ENCODE measurements at regions of chr18 and their contacts with region 1.

Region 1: DNA sequence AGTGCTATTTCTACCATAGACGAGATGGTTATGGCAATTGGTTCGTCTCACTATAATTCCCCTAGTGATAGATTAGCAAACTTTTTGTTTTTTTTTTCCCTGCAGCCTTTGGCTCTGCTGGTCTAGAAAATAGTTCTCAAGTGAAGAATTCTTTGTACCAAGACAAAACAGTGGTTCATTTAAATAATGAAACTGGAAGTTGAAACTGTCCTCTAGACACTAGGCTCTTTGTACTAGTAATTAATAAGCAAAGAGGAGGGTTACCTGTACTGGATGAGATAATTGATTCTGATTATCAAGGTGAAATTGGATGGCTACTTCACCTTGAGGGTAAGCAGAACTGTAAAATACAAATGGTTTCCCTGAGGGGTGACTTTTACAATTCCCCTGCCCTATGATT is 156.9 kb upstream of the DCC start:
- DNase-seq: no peak
- ATAC-seq: no peak
- H3K4me3 ChIP-seq: no peak overlapping the region
- H3K27ac ChIP-seq: no peak overlapping the region
- H3K4me1 ChIP-seq: no peaks in the 10 kb centered on the region
- H3K27me3 ChIP-seq: no peaks in the 10 kb centered on the region
- CTCF ChIP-seq: no peak
- POLR2A ChIP-seq: no peak

Region 2: DNA sequence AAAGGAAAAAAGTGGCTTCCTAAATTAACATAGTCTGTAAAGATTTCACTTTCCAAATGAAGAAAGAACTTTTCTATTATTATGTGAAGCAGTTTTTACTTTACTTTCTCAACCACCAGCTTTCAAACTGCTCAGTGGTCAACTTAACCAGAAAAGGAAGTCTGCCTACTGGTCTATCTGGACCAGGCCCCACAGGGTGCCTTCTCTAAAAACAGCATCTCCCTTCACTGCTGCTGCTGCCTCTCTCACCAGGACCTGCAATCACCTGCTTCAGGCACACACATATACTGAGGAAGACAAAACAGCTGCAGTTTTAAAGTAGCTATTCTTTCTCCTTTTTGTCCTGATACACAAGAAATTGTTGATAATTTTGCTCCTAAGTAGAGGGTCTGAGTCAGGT is 64.4 kb before region 1 on chr18:
- intact Hi-C with region 1: loop called in 1 of 10 experiments (anchors 10 kb)
- DNase-seq: no peak
- ATAC-seq: no peak
- H3K4me3 ChIP-seq: no peak overlapping the region
- H3K27ac ChIP-seq: no peak overlapping the region
- H3K4me1 ChIP-seq: no peaks in the 10 kb centered on the region
- H3K27me3 ChIP-seq: no peaks in the 10 kb centered on the region
- CTCF ChIP-seq: no peak
- POLR2A ChIP-seq: no peak

Region 3: GRCh38 chr18:52237551-52237950 is 54.4 kb after region 1 on chr18:
- intact Hi-C with region 1: no loop called
- DNase-seq: no peak
- ATAC-seq: no peak
- H3K4me3 ChIP-seq: no peak overlapping the region
- H3K27ac ChIP-seq: no peak overlapping the region
- H3K4me1 ChIP-seq: no peaks in the 10 kb centered on the region
- H3K27me3 ChIP-seq: no peaks in the 10 kb centered on the region
- CTCF ChIP-seq: no peak
- POLR2A ChIP-seq: no peak